ENCODE measurements at regions of chrX and their contacts with region 1.

Region 1: DNA sequence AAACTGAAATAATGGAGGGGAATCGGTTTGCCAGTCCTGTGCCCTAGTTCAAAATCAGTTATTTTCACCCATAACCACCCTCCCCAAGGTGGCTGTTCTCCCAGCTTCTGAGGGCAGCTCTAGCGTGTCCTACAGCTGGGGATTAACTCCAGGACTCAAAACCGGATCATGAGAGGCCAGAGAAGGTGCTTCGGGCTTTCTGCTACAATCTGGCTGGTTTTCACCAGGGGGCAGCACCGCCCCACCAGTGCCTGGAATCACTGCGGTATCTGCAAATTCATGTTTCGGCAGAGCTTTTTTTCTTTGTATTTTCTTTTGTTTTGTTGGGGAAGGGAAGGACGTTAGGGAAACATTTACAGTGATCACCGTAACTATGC is 28.4 kb downstream of the PDHA1 start:
- DNase-seq: peak in 9 of 10 donors; percentile 31 to 95 (median 58)

Region 2: DNA sequence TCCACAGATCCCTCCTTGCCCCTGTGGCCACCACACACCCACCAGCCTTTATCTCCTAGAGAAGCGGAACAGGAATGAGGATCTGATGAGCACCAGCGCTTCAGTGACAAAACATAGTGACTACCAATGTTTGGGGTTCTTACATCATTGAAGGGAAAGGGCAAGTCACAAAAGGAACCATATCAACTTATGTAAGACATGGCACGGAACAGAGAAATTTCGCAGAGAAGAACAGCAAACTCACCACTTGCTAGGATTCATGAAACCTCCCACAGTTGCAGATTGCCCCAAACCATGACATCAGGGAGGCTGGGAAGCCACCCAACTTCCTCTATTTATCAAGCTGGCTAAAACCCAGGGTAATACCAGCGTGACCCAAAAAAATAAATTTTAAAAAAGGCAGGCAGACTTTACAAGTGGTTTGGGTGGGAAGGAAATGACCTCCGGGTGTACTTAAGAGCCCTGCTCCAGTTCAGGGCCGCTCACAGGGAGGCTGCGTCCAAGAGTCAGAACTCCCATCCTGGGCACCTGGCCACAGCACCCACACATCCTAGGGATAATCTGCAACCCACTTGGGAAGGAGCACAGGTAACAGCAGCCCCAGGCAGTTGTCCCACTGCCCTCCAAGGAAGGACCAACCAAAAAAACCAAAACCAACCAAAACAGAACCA is 285.9 kb before region 1 on chrX:
- intact Hi-C with region 1: no loop called
- DNase-seq: no peak

Region 3: GRCh38 chrX:19204636-19205035 is 167.5 kb before region 1 on chrX:
- intact Hi-C with region 1: no loop called
- DNase-seq: no peak

Region 4: GRCh38 chrX:19358526-19358925 is 13.6 kb before region 1 on chrX:
- intact Hi-C with region 1: no loop called
- DNase-seq: no peak

Region 5: DNA sequence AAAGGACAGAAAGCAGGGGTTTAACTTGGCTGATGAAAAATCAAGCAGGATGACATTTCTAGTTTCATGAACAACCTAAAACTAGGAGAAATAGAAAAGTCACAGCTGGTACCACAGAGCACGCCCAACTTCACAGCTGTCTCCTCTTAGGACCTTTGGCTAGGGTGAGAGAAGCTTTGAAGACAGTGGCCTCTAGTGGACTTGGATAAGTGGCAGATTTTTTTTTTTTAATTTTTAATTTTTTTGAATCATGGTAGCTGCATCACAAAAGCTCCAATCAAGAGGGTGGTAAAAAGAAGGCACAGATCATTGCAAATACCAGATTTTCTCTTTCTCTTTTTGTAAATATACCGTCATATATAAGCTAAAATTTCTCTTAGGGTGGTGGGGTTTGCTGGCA is 163.3 kb after region 1 on chrX:
- intact Hi-C with region 1: loop called (anchors 10 kb)
- DNase-seq: no peak